Activated B cell treated with CpG ODN at 0.5 μM for 24 hours (primary cell): ENCODE measurements at regions of chr3 and their contacts with region 1.

Region 1: DNA sequence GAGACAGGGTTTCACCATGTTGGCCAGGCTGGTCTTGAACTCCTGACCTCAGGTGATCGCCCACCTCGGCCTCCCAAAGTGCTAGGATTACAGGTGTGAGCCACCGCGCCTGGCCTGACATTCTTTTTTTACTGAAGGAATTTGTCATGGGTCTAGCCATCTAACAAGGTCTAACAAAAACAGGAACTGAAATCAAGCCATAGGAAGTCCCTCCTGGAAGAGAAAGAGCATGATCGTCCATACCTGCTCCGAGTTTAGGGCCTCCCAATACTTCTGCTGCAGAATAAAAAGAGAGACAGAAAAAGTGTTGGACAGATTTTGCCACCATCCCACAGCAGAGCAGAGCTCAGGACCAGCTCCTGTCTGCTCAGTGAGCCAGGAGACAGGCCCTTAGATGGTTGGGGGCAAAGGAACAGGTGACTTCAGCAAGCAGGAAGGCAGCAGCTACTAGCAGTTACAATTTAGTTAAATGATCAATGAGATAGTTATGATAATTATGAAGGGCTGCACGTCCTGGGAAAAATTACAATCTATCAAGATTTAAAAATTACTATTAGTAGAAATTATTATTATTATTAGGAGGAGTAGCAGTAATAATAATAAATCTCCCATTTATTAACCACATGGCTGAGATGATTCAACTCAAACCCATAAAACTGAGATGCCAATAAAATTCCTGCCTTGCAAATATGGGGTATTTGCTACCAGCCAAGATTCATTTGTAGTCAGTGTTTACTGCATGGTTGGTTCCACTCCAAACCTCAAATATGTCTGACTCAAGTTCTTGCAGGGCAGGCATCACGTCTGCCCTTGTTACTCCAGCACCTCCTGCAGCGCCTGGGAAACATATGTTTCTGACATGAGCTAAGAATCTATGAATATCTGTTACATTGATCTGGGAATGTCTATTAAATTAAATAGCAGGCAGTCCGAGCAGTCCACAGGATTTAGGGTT is 40.1 kb downstream of the TMEM44 start:
- DNase-seq: no peak
- ATAC-seq: peak; percentile 21
- H3K4me3 Mint-ChIP-seq: no peak overlapping the region
- H3K27ac Mint-ChIP-seq: no peak overlapping the region
- H3K4me1 Mint-ChIP-seq: peaks cover 19% of the 10 kb centered on the region
- H3K27me3 Mint-ChIP-seq: no peaks in the 10 kb centered on the region
- CTCF ChIP-seq: no peak

Region 2: DNA sequence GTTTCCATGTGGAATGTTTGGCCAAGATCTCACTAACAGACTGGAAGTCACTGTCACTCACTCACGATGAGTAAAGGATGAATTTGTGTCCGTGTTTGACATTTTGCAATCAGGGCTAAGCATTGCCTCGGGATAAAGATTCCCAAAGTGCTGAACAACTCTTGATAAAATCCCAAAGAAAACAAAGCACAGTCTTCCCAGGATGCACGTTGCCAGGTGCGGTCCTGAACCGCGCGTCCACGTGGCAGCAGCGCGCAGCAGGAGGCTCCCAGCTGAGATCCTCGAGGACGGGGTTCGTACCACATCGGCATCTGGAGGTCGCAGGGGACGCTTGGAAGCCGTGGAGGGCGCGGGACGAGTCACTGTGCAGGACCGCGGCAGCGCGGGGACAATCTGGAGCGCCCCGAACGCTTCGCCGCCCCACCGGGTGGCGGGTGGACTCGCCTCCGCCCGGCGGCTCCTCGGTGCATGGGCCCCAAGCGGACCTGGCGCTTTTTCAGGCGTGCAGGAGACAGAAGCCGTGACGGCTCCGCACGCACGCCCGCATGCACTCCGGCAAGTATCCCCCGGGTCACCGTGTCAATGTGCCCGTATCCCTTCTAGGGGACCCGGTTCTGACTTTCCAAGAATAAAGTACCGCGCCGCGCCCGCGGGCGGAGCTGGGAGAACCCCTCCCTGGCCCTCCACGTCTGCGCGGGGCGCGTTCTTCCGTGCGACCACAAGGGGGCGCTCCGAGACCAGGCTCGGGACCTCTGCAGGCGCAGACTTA is 259.7 kb before region 1 on chr3:
- CTCF ChIA-PET with region 1: interaction called, 3 read pairs
- POLR2A ChIA-PET with region 1: no interaction called
- intact Hi-C with region 1: loop called (anchors 2 kb)
- DNase-seq: peak; percentile 87
- ATAC-seq: peak; percentile 96
- H3K4me3 Mint-ChIP-seq: peak overlapping the region; percentile 76
- H3K27ac Mint-ChIP-seq: no peak overlapping the region
- H3K4me1 Mint-ChIP-seq: peaks cover 7% of the 10 kb centered on the region
- H3K27me3 Mint-ChIP-seq: peaks cover 28% of the 10 kb centered on the region
- CTCF ChIP-seq: peak; percentile 97

Region 3: GRCh38 chr3:194573691-194574437 is 19.2 kb before region 1 on chr3:
- CTCF ChIA-PET with region 1: interaction called, 4 read pairs
- POLR2A ChIA-PET with region 1: no interaction called
- intact Hi-C with region 1: loop called (anchors 2 kb)
- DNase-seq: no peak
- ATAC-seq: peak; percentile 83
- H3K4me3 Mint-ChIP-seq: no peak overlapping the region
- H3K27ac Mint-ChIP-seq: no peak overlapping the region
- H3K4me1 Mint-ChIP-seq: peaks cover 8% of the 10 kb centered on the region
- H3K27me3 Mint-ChIP-seq: peaks cover 25% of the 10 kb centered on the region
- CTCF ChIP-seq: no peak

Region 4: GRCh38 chr3:196081791-196082618 is 1488.9 kb after region 1 on chr3 and contains the start of gene TFRC:
- CTCF ChIA-PET with region 1: no interaction called
- POLR2A ChIA-PET with region 1: no interaction called
- intact Hi-C with region 1: no loop called
- DNase-seq: peak; percentile 99
- ATAC-seq: peak; percentile 94
- H3K4me3 Mint-ChIP-seq: peak within 1 kb of the TSS; percentile 99
- H3K27ac Mint-ChIP-seq: peak within 1 kb of the TSS; percentile 91
- H3K4me1 Mint-ChIP-seq: peaks cover 47% of the 10 kb centered on the region
- H3K27me3 Mint-ChIP-seq: no peaks in the 10 kb centered on the region
- CTCF ChIP-seq: no peak
- total RNA-seq, gene TFRC: 238 and 290 TPM in 2 replicates